ENCODE measurements at regions of chr20 and their contacts with region 1.

Region 1: DNA sequence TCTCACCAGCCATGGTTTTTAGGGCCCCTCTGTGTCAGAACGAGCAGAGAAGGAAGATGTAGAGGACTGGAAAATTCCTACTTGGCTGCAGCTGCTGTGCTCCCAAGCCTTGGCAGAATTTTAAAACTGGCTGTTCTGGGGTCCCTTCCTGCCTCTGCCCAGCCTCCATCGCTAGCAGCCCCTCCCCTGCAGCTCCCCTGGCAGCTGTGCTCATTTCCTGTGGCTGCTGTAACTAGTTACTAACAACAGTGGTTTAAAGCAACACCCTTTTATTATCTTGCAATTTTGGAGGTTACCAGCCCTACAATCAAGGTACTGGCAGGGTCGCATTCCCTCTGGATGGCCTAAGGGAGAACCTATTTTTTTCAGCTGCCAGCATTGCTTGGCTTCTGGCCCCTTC is 3.7 kb upstream of the CST11 start:
- DNase-seq: no peak
- H3K4me3 ChIP-seq: no peak overlapping the region
- H3K27ac ChIP-seq: no peak overlapping the region
- H3K4me1 ChIP-seq: no peaks in the 10 kb centered on the region
- H3K27me3 ChIP-seq: no peaks in the 10 kb centered on the region
- CTCF ChIP-seq: no peak

Region 2: DNA sequence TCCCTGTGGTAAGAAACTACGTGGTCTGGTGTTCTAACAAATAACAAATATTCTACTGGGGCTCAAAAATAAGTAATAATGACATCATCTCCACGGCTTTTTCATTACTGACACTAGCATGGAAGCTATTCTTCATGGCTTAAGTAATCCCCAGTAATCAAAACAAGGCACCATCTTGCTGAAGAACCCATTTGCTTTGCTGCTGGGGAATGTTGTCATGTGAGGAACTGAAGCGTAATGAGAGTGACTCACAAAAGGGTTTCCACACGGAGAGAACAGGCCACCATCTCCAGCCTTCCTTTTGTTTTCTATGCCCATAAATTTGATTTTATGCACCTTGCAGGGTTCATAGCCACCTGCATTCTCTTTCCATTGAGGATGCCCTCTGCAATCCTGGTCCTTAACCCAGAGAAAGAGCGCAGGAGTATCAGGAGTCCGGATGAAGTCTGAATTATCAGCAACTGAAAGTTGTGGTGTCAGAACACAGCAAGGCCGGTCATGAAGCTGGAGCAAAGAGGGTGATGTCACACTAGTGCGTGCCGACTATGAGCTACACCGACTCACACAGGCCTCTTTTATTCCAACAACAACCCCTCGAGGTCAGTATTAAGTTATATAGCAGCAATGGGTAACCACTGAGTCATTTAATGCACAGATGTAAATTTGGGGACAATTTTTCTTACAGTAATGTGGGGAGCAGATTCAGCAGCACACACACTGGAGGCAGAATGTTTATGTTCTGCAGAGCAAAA is 595.0 kb before region 1 on chr20:
- intact Hi-C with region 1: no loop called
- DNase-seq: no peak
- H3K4me3 ChIP-seq: no peak overlapping the region
- H3K27ac ChIP-seq: no peak overlapping the region
- H3K4me1 ChIP-seq: no peaks in the 10 kb centered on the region
- H3K27me3 ChIP-seq: no peaks in the 10 kb centered on the region
- CTCF ChIP-seq: no peak

Region 3: GRCh38 chr20:23710771-23711170 is 254.4 kb after region 1 on chr20:
- intact Hi-C with region 1: loop called (anchors 10 kb)
- DNase-seq: no peak
- H3K4me3 ChIP-seq: no peak overlapping the region
- H3K27ac ChIP-seq: no peak overlapping the region
- H3K4me1 ChIP-seq: no peaks in the 10 kb centered on the region
- H3K27me3 ChIP-seq: no peaks in the 10 kb centered on the region
- CTCF ChIP-seq: no peak